Mammary epithelial cell (primary cell): ENCODE measurements at regions of chr20 and their contacts with region 1.

Region 1: GRCh38 chr20:47929363-47930123 is 144.3 kb upstream of the SULF2 start:
- DNase-seq: peak; percentile 90
- H3K4me3 ChIP-seq: no peak overlapping the region
- H3K27ac ChIP-seq: peak overlapping the region; percentile 99
- H3K4me1 ChIP-seq: peaks cover 46% of the 10 kb centered on the region
- H3K27me3 ChIP-seq: no peaks in the 10 kb centered on the region
- CTCF ChIP-seq: no peak

Region 2: GRCh38 chr20:47950073-47950913 is 20.8 kb after region 1 on chr20:
- CTCF ChIA-PET with region 1: no interaction called
- dilution Hi-C with region 1: no loop called
- in situ Hi-C with region 1: no loop called
- intact Hi-C with region 1: loop called (anchors 2 kb)
- DNase-seq: peak; percentile 20
- H3K4me3 ChIP-seq: no peak overlapping the region
- H3K27ac ChIP-seq: no peak overlapping the region
- H3K4me1 ChIP-seq: no peaks in the 10 kb centered on the region
- H3K27me3 ChIP-seq: no peaks in the 10 kb centered on the region
- CTCF ChIP-seq: no peak

Region 3: GRCh38 chr20:48139262-48139987 is 209.9 kb after region 1 on chr20:
- CTCF ChIA-PET with region 1: no interaction called
- dilution Hi-C with region 1: no loop called
- in situ Hi-C with region 1: no loop called
- intact Hi-C with region 1: loop called (anchors 5 kb)
- DNase-seq: peak; percentile 76
- H3K4me3 ChIP-seq: no peak overlapping the region
- H3K27ac ChIP-seq: no peak overlapping the region
- H3K4me1 ChIP-seq: peaks cover 13% of the 10 kb centered on the region
- H3K27me3 ChIP-seq: no peaks in the 10 kb centered on the region
- CTCF ChIP-seq: no peak